WTC11 (cell line): ENCODE measurements at regions of chr2 and their contacts with region 1.

Region 1: GRCh38 chr2:200963124-200963917 is at the start of gene ORC2:
- DNase-seq: peak; percentile 96
- ATAC-seq: peak; percentile 95
- H3K4me3 Mint-ChIP-seq: peak within 1 kb of the TSS; percentile 98
- H3K27ac Mint-ChIP-seq: peak within 1 kb of the TSS; percentile 98
- H3K4me1 Mint-ChIP-seq: peaks cover 30% of the 10 kb centered on the region
- H3K27me3 Mint-ChIP-seq: no peaks in the 10 kb centered on the region
- CTCF ChIP-seq: 0 out of 2 replicates have a peak, but pooled peaks have one; percentile 22
- total RNA-seq, gene ORC2: 54.9 to 57.9 TPM (median 56.0 TPM) in 3 replicates

Region 2: GRCh38 chr2:200922439-200922838 is 40.9 kb before region 1 on chr2:
- CTCF ChIA-PET with region 1: no interaction called
- POLR2A ChIA-PET with region 1: no interaction called
- DNase-seq: no peak
- ATAC-seq: no peak
- H3K4me3 Mint-ChIP-seq: no peak overlapping the region
- H3K27ac Mint-ChIP-seq: no peak overlapping the region
- H3K4me1 Mint-ChIP-seq: no peaks in the 10 kb centered on the region
- H3K27me3 Mint-ChIP-seq: no peaks in the 10 kb centered on the region
- CTCF ChIP-seq: no peak

Region 3: GRCh38 chr2:200987137-200987536 is 23.8 kb after region 1 on chr2:
- CTCF ChIA-PET with region 1: no interaction called
- POLR2A ChIA-PET with region 1: no interaction called
- DNase-seq: no peak
- ATAC-seq: peak; percentile 52
- H3K4me3 Mint-ChIP-seq: no peak overlapping the region
- H3K27ac Mint-ChIP-seq: peak overlapping the region; percentile 64
- H3K4me1 Mint-ChIP-seq: peaks cover 5% of the 10 kb centered on the region
- H3K27me3 Mint-ChIP-seq: no peaks in the 10 kb centered on the region
- CTCF ChIP-seq: no peak

Region 4: GRCh38 chr2:201071479-201072200 is 108.3 kb after region 1 on chr2 and contains the starts of genes HYCC2 and NDUFB3:
- CTCF ChIA-PET with region 1: interaction called, 19 read pairs
- POLR2A ChIA-PET with region 1: interaction called, 3 read pairs
- DNase-seq: peak; percentile 89
- ATAC-seq: peak; percentile 98
- H3K4me3 Mint-ChIP-seq: peak within 1 kb of the TSS; percentile 95
- H3K27ac Mint-ChIP-seq: peak within 1 kb of the TSS; percentile 93
- H3K4me1 Mint-ChIP-seq: peaks cover 17% of the 10 kb centered on the region
- H3K27me3 Mint-ChIP-seq: no peaks in the 10 kb centered on the region
- CTCF ChIP-seq: no peak
- total RNA-seq, gene HYCC2: 8.8 to 10.4 TPM (median 9.1 TPM) in 3 replicates
- total RNA-seq, gene NDUFB3: 65.5 to 70.9 TPM (median 66.8 TPM) in 3 replicates

Region 5: DNA sequence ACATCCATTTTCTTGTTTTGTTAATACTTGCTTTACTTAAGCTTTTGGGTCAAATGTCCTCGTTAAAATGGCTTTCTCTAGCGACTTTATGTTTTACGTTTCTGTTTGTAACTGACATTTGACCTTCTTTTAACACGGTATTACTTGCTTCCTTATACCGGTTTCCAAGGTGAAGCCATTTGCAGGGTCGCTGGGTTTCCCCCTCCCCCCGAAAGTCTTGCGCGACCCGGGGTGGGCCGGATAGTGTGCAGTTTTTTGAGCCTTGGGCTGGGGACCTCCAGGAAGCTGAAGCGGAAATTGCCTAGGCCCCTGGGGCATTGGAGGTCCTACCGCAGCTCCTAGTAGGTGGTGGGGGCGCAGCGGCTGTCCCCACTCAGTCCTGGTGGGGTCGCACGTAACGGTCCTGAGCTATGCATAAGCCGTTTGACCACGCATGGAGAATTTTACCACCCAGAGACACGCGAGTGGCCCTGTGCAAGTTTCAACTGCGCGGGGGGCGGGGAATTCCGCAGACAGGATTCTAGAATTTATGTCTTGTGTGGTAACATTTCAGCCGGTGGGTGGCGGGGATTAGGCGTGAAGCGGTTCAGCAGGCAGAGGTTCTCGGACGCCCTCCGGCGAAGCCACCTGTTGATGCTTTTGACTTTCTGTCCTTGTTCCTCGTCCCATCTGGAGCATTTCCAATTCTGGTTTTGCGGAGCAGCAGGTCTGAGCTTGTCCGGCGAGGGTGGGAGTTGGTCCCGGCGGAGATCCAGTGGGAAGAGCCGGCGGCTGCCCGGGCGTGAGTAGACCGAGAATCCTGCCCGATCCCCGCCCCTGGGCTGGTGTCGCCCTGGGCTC is 155.0 kb after region 1 on chr2:
- CTCF ChIA-PET with region 1: interaction called, 16 read pairs
- POLR2A ChIA-PET with region 1: interaction called, 5 read pairs
- DNase-seq: peak; percentile 76
- ATAC-seq: peak; percentile 49
- H3K4me3 Mint-ChIP-seq: peak overlapping the region; percentile 88
- H3K27ac Mint-ChIP-seq: peak overlapping the region; percentile 95
- H3K4me1 Mint-ChIP-seq: peaks cover 43% of the 10 kb centered on the region
- H3K27me3 Mint-ChIP-seq: peaks cover 4% of the 10 kb centered on the region; the same call in 1 of the 2 replicates
- CTCF ChIP-seq: no peak

Region 6: DNA sequence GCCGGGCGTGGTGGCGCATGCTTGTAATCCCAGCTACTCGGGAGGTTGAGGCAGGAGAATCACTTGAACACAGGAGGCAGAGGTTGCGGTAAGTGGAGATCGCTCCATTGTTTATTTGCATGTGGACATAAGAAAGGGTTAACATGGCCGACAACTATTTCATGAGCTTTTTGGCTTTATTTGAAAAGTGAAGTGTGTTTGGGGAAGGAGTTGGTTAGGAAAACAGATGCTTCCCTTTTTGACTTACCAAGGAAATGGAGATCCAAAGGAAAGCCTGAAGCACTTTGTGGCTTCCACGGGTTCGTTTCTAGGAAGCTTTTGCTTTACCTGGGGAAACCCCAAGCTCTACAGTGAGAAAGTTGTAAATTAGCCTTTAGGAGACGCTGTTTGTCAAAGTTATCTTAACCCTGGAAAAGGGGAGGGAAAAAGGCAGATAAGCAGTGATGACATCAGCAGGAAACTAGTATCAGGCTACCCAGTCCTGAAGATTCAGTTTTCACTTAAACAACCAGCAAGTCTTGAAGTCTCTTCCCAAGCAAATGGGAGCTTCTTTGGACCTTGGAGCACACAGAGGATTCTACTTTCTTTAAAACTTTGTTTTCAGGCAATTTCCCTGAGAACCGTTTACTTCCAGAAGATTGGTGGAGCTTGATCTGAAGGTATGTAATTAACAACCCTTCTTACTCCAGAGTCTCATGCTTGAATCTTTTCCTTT is 219.5 kb after region 1 on chr2 and contains the start of gene CASP10:
- CTCF ChIA-PET with region 1: interaction called, 12 read pairs
- POLR2A ChIA-PET with region 1: no interaction called
- DNase-seq: no peak
- ATAC-seq: peak; percentile 94
- H3K4me3 Mint-ChIP-seq: peak within 1 kb of the TSS; percentile 64
- H3K27ac Mint-ChIP-seq: peak within 1 kb of the TSS; percentile 90
- H3K4me1 Mint-ChIP-seq: peaks cover 15% of the 10 kb centered on the region
- H3K27me3 Mint-ChIP-seq: no peaks in the 10 kb centered on the region; the same call in none of the 2 replicates
- CTCF ChIP-seq: no peak
- total RNA-seq, gene CASP10: 2.8 to 2.9 TPM (median 2.8 TPM) in 3 replicates